ENCODE measurements at regions of chr3 and their contacts with region 1.

Region 1: GRCh38 chr3:50414616-50415015 is 55.3 kb upstream of the TMEM115 start:
- DNase-seq: no peak
- ATAC-seq: no peak
- H3K4me3 ChIP-seq: no peak overlapping the region
- H3K4me3 Mint-ChIP-seq: no peak overlapping the region
- H3K27ac ChIP-seq: no peak overlapping the region
- H3K27ac Mint-ChIP-seq: no peak overlapping the region
- H3K4me1 ChIP-seq: no peaks in the 10 kb centered on the region
- H3K4me1 Mint-ChIP-seq: no peaks in the 10 kb centered on the region
- H3K27me3 ChIP-seq: no peaks in the 10 kb centered on the region
- H3K27me3 Mint-ChIP-seq: no peaks in the 10 kb centered on the region
- CTCF ChIP-seq: no peak

Region 2: DNA sequence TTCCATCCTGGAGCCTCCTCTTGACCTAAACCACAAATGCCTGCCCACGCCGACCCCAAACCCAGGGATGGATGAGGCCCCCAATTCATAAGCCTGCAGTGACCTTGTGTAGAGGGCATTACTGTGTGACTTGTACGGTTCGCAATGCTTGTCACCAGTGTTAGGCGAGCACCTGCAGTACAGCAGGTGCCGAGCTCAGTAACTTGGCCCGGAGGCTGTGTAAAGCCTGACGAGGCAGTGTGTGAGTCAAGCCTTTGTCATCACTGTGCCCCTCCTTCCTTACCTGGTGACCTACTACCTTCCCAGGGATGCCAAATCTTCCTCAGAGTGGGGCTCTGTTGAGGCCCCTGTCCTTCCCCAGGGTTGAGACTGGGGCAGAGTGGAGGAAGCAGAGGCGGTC is 18.1 kb before region 1 on chr3:
- CTCF ChIA-PET with region 1: no interaction called
- POLR2A ChIA-PET with region 1: no interaction called
- intact Hi-C with region 1: no loop called
- DNase-seq: no peak
- ATAC-seq: no peak
- H3K4me3 ChIP-seq: no peak overlapping the region
- H3K4me3 Mint-ChIP-seq: no peak overlapping the region
- H3K27ac ChIP-seq: no peak overlapping the region
- H3K27ac Mint-ChIP-seq: no peak overlapping the region
- H3K4me1 ChIP-seq: no peaks in the 10 kb centered on the region
- H3K4me1 Mint-ChIP-seq: no peaks in the 10 kb centered on the region
- H3K27me3 ChIP-seq: no peaks in the 10 kb centered on the region
- H3K27me3 Mint-ChIP-seq: no peaks in the 10 kb centered on the region
- CTCF ChIP-seq: no peak

Region 3: DNA sequence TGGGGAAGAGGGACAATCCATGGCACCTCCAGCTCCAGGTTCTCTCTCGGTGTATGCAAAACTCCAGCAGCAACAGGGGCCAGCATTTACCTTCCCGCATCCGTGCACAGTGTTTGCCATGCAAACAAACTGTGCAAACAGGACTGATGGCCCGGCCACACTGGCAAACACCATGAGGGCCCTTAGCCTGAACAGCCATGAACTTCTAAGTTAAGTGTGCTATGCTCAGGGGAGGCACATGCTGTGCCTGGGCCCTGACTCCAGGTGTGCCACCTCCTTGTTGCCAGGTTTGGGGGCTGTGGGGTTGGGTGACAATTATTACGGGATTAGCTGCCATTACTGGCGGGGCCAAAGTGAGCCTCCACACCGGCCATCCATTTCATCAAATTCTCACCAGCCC is 31.3 kb after region 1 on chr3:
- CTCF ChIA-PET with region 1: no interaction called
- POLR2A ChIA-PET with region 1: no interaction called
- intact Hi-C with region 1: loop called in 1 of 2 experiments (anchors 1 kb)
- DNase-seq: no peak
- ATAC-seq: no peak
- H3K4me3 ChIP-seq: no peak overlapping the region
- H3K4me3 Mint-ChIP-seq: no peak overlapping the region
- H3K27ac ChIP-seq: no peak overlapping the region
- H3K27ac Mint-ChIP-seq: no peak overlapping the region
- H3K4me1 ChIP-seq: peaks cover 35% of the 10 kb centered on the region
- H3K4me1 Mint-ChIP-seq: peaks cover 26% of the 10 kb centered on the region
- H3K27me3 ChIP-seq: no peaks in the 10 kb centered on the region
- H3K27me3 Mint-ChIP-seq: no peaks in the 10 kb centered on the region
- CTCF ChIP-seq: no peak

Measured in CD4-positive, alpha-beta T cell (primary cell).